ENCODE measurements at regions of chr4 and their contacts with region 1.

Region 1: DNA sequence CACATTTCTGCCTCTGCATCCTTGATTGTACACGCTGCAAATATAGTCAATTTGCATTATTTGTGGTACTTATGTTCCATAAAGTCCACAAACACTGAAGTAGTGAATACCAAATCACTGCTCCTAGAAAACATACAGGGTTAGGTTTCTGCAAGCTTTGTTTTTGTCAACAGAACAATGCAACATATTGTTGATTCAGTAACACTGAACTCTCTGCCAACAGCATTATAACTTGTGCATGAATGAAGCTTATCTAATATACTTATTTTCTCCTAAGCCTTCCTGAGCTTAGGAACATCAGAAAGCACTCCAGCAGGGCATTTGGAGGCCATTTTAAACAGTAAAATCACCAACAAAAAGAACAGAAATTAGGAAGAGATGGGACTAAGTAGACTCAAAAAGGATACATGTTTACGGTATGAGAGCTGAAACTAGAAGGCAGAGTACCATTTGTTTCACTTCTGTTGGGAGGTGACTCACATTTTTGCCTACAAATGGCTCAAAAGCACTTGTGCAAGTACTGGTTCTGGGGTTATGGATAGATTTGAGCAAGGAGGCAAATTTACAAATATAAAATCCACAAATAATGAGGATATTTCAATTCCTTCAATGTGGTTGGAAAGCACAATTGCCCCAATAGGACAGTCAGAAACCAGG is 14.1 kb downstream of the COX18 start:
- DNase-seq: no peak
- ATAC-seq: no peak
- H3K4me3 ChIP-seq: no peak overlapping the region
- H3K4me3 Mint-ChIP-seq: no peak overlapping the region
- H3K27ac ChIP-seq: no peak overlapping the region
- H3K27ac Mint-ChIP-seq: no peak overlapping the region
- H3K4me1 ChIP-seq: no peaks in the 10 kb centered on the region
- H3K4me1 Mint-ChIP-seq: no peaks in the 10 kb centered on the region
- H3K27me3 ChIP-seq: no peaks in the 10 kb centered on the region
- H3K27me3 Mint-ChIP-seq: no peaks in the 10 kb centered on the region

Region 2: GRCh38 chr4:71235311-71236201 is 1819.8 kb before region 1 on chr4:
- CTCF ChIA-PET with region 1: no interaction called
- POLR2A ChIA-PET with region 1: interaction called in 1 of 2 experiments, 10 read pairs
- DNase-seq: no peak
- ATAC-seq: no peak
- H3K4me3 ChIP-seq: no peak overlapping the region
- H3K4me3 Mint-ChIP-seq: no peak overlapping the region
- H3K27ac ChIP-seq: no peak overlapping the region
- H3K27ac Mint-ChIP-seq: no peak overlapping the region
- H3K4me1 ChIP-seq: no peaks in the 10 kb centered on the region
- H3K4me1 Mint-ChIP-seq: peaks cover 0 to 2% (median 0%) of the 10 kb centered on the region in 3 donors
- H3K27me3 ChIP-seq: no peaks in the 10 kb centered on the region
- H3K27me3 Mint-ChIP-seq: no peaks in the 10 kb centered on the region

Measured in T-cell (primary cell).